CD4-positive, alpha-beta T cell (primary cell): ENCODE measurements at regions of chr5 and their contacts with region 1.

Region 1: DNA sequence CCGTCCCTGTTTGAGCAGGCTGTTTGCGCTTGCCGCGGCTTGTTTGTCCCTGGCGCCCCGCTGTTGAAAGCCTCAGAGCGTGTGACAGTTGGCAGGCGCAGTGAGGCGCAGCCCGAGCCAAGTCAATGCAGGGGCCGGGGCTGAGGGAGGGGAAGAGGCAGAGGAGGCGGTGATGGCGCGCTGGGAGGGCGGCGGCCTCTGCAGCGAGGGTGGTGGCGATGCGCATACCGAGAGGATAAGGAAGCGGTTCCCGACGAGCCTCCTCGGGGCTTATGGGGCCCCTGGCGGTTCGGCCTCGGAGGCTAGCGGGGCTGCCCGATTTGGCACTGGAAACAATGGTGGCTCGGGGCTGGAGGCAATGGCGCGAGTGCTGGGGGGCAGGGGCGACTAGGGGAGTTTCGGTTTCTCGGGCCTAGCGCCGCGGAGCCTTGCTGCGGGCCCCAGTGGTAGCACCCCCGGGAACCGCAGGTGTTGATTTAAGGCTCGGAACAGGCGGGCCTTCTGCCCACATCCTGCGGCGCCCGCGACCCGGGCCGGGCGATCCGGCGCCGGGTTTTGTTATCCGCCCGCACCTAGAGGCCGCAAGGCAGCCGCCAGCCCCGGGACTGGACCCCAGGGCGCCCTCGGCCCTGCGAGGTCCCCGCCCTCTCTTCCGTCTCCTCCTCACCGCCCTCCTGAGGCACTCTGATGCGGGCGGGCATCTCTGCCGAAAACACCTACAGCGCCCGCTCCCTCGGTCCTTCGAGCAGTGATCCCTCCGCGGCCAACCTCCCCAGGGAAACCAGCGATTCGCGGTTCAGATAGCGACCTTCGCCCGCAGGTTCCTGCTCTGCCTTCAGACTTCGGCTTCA is 947 bp upstream of the LNPEP start:
- DNase-seq: peak; percentile 86 to 98 (median 94)
- ATAC-seq: peak; percentile 63
- H3K4me3 ChIP-seq: peak overlapping the region; percentile 74
- H3K4me3 Mint-ChIP-seq: peak overlapping the region; percentile 94
- H3K27ac ChIP-seq: peak overlapping the region; percentile 83 to 94
- H3K27ac Mint-ChIP-seq: peak overlapping the region; percentile 96
- H3K4me1 ChIP-seq: peaks cover 32% of the 10 kb centered on the region
- H3K4me1 Mint-ChIP-seq: peaks cover 73% of the 10 kb centered on the region
- H3K27me3 ChIP-seq: no peaks in the 10 kb centered on the region
- H3K27me3 Mint-ChIP-seq: no peaks in the 10 kb centered on the region
- CTCF ChIP-seq: no peak

Region 2: DNA sequence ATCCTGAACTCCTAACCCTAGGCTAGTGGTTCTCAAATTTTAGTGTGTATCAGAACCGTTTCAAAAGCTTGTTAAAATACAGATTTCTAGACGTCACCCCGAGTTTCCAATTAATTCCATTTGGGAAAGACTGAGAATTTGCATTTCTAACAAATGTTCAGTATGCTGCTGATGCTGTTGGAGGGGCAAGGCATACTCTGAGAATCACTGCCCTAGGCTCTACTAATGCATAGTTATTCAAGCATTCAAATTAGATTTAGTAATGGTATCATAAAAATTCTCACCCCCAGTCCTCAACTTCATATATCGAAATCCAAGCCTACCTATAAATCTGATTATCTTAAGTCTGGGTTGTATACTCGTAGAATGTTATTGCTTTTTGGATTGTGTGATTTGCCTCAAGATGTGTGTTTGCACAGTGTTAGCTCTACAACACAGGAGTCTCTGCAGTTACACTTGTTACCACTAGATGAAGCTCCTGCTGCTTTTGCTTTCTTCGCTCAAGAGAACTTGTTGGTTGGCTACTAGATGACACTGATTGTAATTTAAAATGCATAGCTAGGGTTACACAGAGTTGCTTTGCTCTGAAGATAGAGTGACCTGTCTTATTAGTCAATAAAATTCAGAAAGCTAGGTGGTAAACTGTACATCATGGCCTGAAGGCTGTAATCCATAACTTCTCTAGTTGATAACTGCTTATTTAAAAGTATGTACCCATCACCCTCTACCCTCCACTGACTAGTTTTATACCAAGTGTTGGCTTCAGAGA is 66.1 kb before region 1 on chr5:
- CTCF ChIA-PET with region 1: interaction called, 6 read pairs
- POLR2A ChIA-PET with region 1: interaction called, 22 read pairs
- intact Hi-C with region 1: loop called (anchors 2 kb)
- DNase-seq: peak in 6 of 14 experiments; percentile 18 to 81 (median 52)
- ATAC-seq: peak; percentile 99
- H3K4me3 ChIP-seq: no peak overlapping the region
- H3K4me3 Mint-ChIP-seq: no peak overlapping the region
- H3K27ac ChIP-seq: no peak overlapping the region
- H3K27ac Mint-ChIP-seq: peak overlapping the region; percentile 22
- H3K4me1 ChIP-seq: peaks cover 21% of the 10 kb centered on the region
- H3K4me1 Mint-ChIP-seq: peaks cover 45% of the 10 kb centered on the region
- H3K27me3 ChIP-seq: no peaks in the 10 kb centered on the region
- H3K27me3 Mint-ChIP-seq: no peaks in the 10 kb centered on the region
- CTCF ChIP-seq: peak; percentile 95

Region 3: DNA sequence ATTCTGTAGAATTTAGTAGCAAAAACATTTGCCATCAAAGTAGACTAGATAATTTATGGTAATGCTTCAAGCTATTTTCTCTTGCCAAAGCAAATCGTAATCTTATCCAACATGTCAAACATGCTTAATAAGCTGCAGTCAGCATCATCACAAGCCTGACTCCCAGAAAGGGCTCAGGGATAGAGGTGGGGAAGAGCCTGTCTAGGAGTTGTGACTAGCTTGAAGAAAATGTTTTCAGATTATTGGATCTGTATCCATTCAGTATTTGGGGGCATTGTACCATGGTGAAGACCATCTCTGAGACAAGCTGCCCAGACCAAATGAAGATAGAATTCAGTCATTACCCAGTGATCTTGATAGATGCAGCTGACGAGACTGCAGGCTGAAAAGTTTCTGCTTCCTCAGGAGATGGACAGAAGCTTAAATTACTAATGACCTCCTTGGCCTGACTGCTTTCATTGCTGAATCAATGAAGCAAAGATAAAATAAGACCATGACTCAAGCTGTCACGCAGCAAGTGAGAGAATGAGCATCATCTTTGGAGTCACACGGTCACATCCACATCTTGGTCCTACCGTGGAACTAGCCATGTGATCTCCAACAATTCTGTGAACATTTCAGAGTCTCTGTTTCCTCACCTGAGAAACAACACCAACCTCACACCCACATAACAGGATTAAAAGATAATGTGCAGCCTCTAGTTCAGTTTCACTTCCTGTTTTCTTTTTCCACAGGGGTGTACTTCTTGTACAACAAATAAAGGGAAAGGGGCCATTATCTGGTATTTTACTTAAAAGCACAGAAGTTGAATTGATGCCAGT is 49.2 kb before region 1 on chr5:
- CTCF ChIA-PET with region 1: no interaction called
- POLR2A ChIA-PET with region 1: interaction called, 10 read pairs
- intact Hi-C with region 1: no loop called
- DNase-seq: peak in 7 of 14 experiments; percentile 14 to 90 (median 45)
- ATAC-seq: peak; percentile 95
- H3K4me3 ChIP-seq: no peak overlapping the region
- H3K4me3 Mint-ChIP-seq: peak overlapping the region; percentile 59
- H3K27ac ChIP-seq: peak overlapping the region; percentile 44 to 82
- H3K27ac Mint-ChIP-seq: peak overlapping the region; percentile 94
- H3K4me1 ChIP-seq: peaks cover 55% of the 10 kb centered on the region
- H3K4me1 Mint-ChIP-seq: peaks cover 76% of the 10 kb centered on the region
- H3K27me3 ChIP-seq: no peaks in the 10 kb centered on the region
- H3K27me3 Mint-ChIP-seq: no peaks in the 10 kb centered on the region
- CTCF ChIP-seq: no peak

Region 4: DNA sequence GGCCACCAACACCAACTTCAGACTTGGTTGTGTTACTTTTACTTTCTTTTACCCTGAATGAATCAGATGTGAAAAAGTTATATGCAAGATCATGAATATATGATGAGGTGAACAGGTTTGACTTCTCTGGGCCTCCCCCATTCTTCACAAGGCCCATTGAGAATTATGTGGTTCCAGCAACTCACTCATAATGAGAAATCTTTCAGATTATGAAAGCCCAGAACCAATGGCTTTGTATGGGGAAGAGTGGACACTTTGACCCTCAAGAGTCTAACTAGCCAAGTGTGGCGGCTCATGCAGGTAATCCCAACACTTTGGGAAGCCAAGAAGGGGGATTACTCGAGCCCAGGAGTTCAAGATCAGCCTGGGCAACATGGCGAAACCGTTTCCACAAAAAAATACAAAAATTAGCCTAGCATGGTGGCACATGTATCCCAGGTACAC is 15.2 kb before region 1 on chr5:
- CTCF ChIA-PET with region 1: no interaction called
- POLR2A ChIA-PET with region 1: interaction called, 24 read pairs
- intact Hi-C with region 1: loop called in 1 of 2 experiments (anchors 2 kb)
- DNase-seq: no peak
- ATAC-seq: no peak
- H3K4me3 ChIP-seq: no peak overlapping the region
- H3K4me3 Mint-ChIP-seq: no peak overlapping the region
- H3K27ac ChIP-seq: no peak overlapping the region
- H3K27ac Mint-ChIP-seq: peak overlapping the region; percentile 37
- H3K4me1 ChIP-seq: peaks cover 15% of the 10 kb centered on the region
- H3K4me1 Mint-ChIP-seq: peaks cover 32% of the 10 kb centered on the region
- H3K27me3 ChIP-seq: no peaks in the 10 kb centered on the region
- H3K27me3 Mint-ChIP-seq: no peaks in the 10 kb centered on the region
- CTCF ChIP-seq: no peak

Region 5: DNA sequence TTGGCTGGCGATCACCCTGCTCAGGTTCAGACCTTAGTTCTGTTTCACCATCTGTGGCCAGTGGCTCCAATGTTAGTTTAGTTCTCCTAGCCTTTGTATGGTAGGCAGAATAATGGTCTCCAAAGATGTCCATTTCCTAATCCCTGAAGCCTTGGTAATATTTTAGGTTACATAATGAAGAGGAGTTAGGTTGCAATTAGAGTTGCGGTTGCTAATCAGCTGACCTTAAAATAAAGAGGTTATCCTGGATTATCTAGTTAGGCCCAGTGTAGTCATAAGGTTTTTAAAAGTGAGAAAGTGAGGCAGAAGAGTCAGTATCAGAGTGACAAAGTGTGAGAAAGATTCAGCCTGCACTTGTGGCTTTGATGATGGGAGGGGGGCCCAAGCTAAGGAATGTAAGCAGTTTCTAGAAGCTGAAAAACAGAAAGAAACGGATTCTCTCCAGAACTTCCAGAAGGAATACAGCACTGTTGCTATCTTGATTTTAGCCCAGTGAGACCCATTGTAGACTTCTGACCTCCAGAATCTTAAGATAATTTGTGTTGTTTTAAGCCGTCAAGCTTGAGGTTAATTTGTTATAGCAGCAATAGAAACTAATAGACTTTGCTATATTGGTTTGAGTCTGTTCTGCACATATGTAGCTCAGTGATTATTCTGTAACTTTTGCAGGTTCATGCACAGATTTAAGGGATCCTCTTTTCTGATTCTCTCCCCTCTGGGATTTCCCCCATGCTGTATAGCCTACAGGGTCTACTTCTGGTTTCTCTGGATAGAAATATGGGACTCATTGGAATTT is 22.5 kb after region 1 on chr5:
- CTCF ChIA-PET with region 1: interaction called, 7 read pairs
- POLR2A ChIA-PET with region 1: interaction called, 59 read pairs
- intact Hi-C with region 1: loop called in 1 of 2 experiments (anchors 1 kb)
- DNase-seq: peak in 3 of 14 experiments; percentile 22 to 42 (median 27)
- ATAC-seq: no peak
- H3K4me3 ChIP-seq: peak overlapping the region; percentile 1
- H3K4me3 Mint-ChIP-seq: peak overlapping the region; percentile 79
- H3K27ac ChIP-seq: peak overlapping the region; percentile 27 to 48
- H3K27ac Mint-ChIP-seq: peak overlapping the region; percentile 88
- H3K4me1 ChIP-seq: peaks cover 45% of the 10 kb centered on the region
- H3K4me1 Mint-ChIP-seq: peaks cover 83% of the 10 kb centered on the region
- H3K27me3 ChIP-seq: no peaks in the 10 kb centered on the region
- H3K27me3 Mint-ChIP-seq: no peaks in the 10 kb centered on the region
- CTCF ChIP-seq: no peak

Region 6: DNA sequence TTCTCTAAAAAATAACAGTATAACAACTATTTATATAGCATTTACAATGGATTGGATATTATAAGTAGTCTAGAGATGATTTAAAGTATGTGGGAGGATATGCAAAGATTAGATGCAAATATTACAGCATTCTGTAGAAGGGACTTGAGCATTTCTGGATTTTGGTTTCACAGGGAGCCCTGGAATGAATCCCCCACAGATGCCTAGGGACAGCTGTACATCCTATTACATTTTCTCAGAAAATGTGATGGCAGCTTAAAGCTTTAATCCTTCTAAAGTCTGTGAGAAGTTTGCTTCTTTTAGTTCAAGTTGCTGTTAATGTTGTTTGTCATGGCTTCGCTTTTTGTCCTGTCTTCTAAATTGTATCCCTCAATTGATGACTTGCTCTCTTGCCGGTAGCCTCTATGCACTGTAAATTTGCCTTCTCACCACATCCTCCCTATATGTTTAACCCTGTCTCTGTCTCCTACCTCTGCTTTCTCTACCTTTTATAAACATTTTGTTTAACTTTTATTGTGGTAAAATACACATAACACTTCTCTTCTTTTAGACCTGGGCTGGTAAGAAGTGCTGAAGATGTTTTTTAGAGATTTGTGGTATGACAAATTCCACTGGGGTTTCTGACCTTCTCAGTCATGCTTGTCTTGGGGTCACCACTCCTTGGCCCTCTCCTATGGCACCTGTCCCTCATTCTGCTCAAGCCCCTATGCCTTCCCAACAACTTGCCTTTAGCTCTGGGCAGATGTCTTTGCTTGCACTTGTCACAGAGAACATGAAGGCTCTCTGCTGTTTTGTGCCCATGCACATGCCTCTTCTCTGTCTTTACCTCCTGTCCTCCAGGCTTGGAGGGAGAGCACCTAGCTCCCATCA is 38.8 kb after region 1 on chr5:
- CTCF ChIA-PET with region 1: interaction called, 4 read pairs
- POLR2A ChIA-PET with region 1: interaction called, 14 read pairs
- intact Hi-C with region 1: loop called in 1 of 2 experiments (anchors 5 kb)
- DNase-seq: peak in 2 of 14 experiments; percentile 31 to 53
- ATAC-seq: peak; percentile 92
- H3K4me3 ChIP-seq: peak overlapping the region; percentile 18
- H3K4me3 Mint-ChIP-seq: peak overlapping the region; percentile 53
- H3K27ac ChIP-seq: no peak overlapping the region
- H3K27ac Mint-ChIP-seq: peak overlapping the region; percentile 67
- H3K4me1 ChIP-seq: peaks cover 32% of the 10 kb centered on the region
- H3K4me1 Mint-ChIP-seq: peaks cover 88% of the 10 kb centered on the region
- H3K27me3 ChIP-seq: no peaks in the 10 kb centered on the region
- H3K27me3 Mint-ChIP-seq: no peaks in the 10 kb centered on the region
- CTCF ChIP-seq: no peak

Region 7: GRCh38 chr5:96997265-96997859 is 62.4 kb after region 1 on chr5:
- CTCF ChIA-PET with region 1: interaction called, 7 read pairs
- POLR2A ChIA-PET with region 1: interaction called, 20 read pairs
- intact Hi-C with region 1: no loop called
- DNase-seq: peak in 4 of 14 experiments; percentile 37 to 65 (median 52)
- ATAC-seq: peak; percentile 76
- H3K4me3 ChIP-seq: no peak overlapping the region
- H3K4me3 Mint-ChIP-seq: no peak overlapping the region
- H3K27ac ChIP-seq: no peak overlapping the region
- H3K27ac Mint-ChIP-seq: peak overlapping the region; percentile 59
- H3K4me1 ChIP-seq: no peaks in the 10 kb centered on the region
- H3K4me1 Mint-ChIP-seq: peaks cover 39% of the 10 kb centered on the region
- H3K27me3 ChIP-seq: no peaks in the 10 kb centered on the region
- H3K27me3 Mint-ChIP-seq: no peaks in the 10 kb centered on the region
- CTCF ChIP-seq: peak; percentile 57